Naive thymus-derived CD4-positive, alpha-beta T cell (primary cell): ENCODE measurements at regions of chrX and their contacts with region 1.

Region 1: GRCh38 chrX:104795804-104796203 is 229.8 kb downstream of the IL1RAPL2 start:
- DNase-seq: no peak
- ATAC-seq: no peak
- H3K4me3 ChIP-seq: no peak overlapping the region
- H3K4me3 Mint-ChIP-seq: no peak overlapping the region
- H3K27ac ChIP-seq: no peak overlapping the region
- H3K27ac Mint-ChIP-seq: no peak overlapping the region
- H3K4me1 ChIP-seq: no peaks in the 10 kb centered on the region
- H3K4me1 Mint-ChIP-seq: no peaks in the 10 kb centered on the region
- H3K27me3 ChIP-seq: no peaks in the 10 kb centered on the region
- H3K27me3 Mint-ChIP-seq: no peaks in the 10 kb centered on the region

Region 2: GRCh38 chrX:104922206-104922621 is 126.4 kb after region 1 on chrX:
- CTCF ChIA-PET with region 1: no interaction called
- POLR2A ChIA-PET with region 1: no interaction called
- intact Hi-C with region 1: loop called in 1 of 2 experiments (anchors 5 kb)
- DNase-seq: peak; percentile 17 to 72 (median 57)
- ATAC-seq: peak; percentile 100
- H3K4me3 ChIP-seq: no peak overlapping the region
- H3K4me3 Mint-ChIP-seq: no peak overlapping the region
- H3K27ac ChIP-seq: no peak overlapping the region
- H3K27ac Mint-ChIP-seq: peak overlapping the region in 1 of 9 donors; percentile 52
- H3K4me1 ChIP-seq: no peaks in the 10 kb centered on the region
- H3K4me1 Mint-ChIP-seq: peaks cover 0 to 5% (median 2%) of the 10 kb centered on the region in 7 donors
- H3K27me3 ChIP-seq: no peaks in the 10 kb centered on the region
- H3K27me3 Mint-ChIP-seq: peaks cover 0 to 7% (median 0%) of the 10 kb centered on the region in 5 donors